Activated T-helper 2 cell treated with anti-CD3 and anti-CD28 coated beads, Interferon-gamma antibody, Interleukin-2, Interleukin-4, amounts not matched to agents 10 μg/mL and 5 μg/mL and 100 μg/mL, durations not matched to agents 14 hours and 24 hours and 36 hours (primary cell): ENCODE measurements at regions of chr2 and their contacts with region 1.

Region 1: DNA sequence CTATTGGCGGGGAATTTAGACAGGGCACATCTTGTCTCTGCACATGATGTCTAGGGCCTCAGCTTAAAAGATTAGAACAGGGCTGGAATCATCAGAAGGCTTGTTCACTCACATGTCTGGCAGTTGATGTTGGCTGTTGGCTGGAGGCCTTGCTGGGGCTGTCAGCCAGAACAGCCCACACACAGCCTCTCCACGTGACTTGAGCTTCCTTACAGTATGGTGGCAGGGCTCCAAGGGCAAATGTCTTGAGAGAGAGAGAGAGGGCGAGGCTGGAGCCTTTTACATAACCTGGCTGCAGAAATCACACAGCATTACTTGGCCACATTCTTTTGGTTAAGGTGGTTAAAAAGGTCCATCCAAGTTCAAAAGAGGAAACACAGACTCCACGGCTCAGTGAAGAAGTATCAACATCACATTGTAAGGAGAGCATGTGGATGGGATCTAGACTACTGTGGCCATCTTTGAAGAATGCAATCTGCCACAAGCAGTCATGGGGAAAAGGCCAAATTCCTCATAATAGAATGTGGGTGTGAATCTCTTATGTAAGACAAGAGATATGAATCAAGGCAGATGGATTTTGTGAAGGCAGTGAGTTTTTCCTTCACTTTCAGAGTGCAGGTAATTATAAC is 30.4 kb downstream of the SRSF7 start:
- DNase-seq: no peak
- H3K4me3 Mint-ChIP-seq: no peak overlapping the region
- H3K27ac Mint-ChIP-seq: peak overlapping the region; percentile 38
- H3K4me1 Mint-ChIP-seq: peaks cover 50% of the 10 kb centered on the region
- H3K27me3 Mint-ChIP-seq: no peaks in the 10 kb centered on the region

Region 2: DNA sequence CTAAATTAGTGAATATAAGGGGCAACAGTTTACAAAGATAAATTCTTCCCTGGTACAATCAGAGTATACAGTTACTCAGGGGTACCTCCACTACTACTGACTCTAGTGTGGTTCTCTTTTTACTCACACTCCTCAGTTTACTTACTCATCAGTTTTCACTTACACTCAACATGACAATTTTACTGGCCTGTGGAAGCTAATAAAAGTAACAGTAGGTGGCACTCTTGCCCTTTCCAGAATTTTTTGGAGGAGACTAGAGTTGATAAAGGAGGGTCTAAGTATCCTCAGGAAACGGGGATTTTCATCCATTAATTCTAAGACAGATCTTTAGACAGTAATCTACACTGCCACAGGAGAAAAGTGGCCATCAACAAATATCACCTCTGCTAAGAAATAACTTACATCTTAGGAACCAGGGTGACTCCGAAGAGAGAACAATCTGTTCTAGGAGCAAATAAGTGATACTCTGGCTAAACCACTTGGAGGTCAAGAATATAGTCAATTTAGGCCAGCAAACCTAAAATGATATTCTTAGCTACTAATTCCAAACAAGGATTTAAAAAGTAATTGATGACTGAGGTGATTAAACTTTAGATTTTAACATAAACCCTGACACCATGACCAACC is 404.9 kb before region 1 on chr2:
- intact Hi-C with region 1: loop called (anchors 10 kb)
- DNase-seq: no peak
- H3K4me3 Mint-ChIP-seq: no peak overlapping the region
- H3K27ac Mint-ChIP-seq: no peak overlapping the region
- H3K4me1 Mint-ChIP-seq: peaks cover 21% of the 10 kb centered on the region
- H3K27me3 Mint-ChIP-seq: no peaks in the 10 kb centered on the region

Region 3: GRCh38 chr2:38552259-38552658 is 168.5 kb before region 1 on chr2:
- intact Hi-C with region 1: no loop called
- DNase-seq: no peak
- H3K4me3 Mint-ChIP-seq: no peak overlapping the region
- H3K27ac Mint-ChIP-seq: peak overlapping the region; percentile 67
- H3K4me1 Mint-ChIP-seq: peaks cover 35% of the 10 kb centered on the region
- H3K27me3 Mint-ChIP-seq: no peaks in the 10 kb centered on the region

Region 4: GRCh38 chr2:38581193-38582147 is 139.3 kb before region 1 on chr2:
- intact Hi-C with region 1: loop called (anchors 2 kb)
- DNase-seq: no peak
- H3K4me3 Mint-ChIP-seq: no peak overlapping the region
- H3K27ac Mint-ChIP-seq: peak overlapping the region; percentile 15
- H3K4me1 Mint-ChIP-seq: peaks cover 39% of the 10 kb centered on the region
- H3K27me3 Mint-ChIP-seq: no peaks in the 10 kb centered on the region

Region 5: GRCh38 chr2:38602732-38603401 is 117.9 kb before region 1 on chr2 and contains the start of gene HNRNPLL:
- intact Hi-C with region 1: loop called (anchors 1 kb)
- DNase-seq: peak; percentile 95
- H3K4me3 Mint-ChIP-seq: peak within 1 kb of the TSS; percentile 90
- H3K27ac Mint-ChIP-seq: peak within 1 kb of the TSS; percentile 91
- H3K4me1 Mint-ChIP-seq: peaks cover 59% of the 10 kb centered on the region
- H3K27me3 Mint-ChIP-seq: no peaks in the 10 kb centered on the region
- total RNA-seq, gene HNRNPLL: 65.7 and 67.7 TPM in 2 replicates

Region 6: GRCh38 chr2:38665854-38666555 is 54.7 kb before region 1 on chr2 and contains the start of gene GALM:
- intact Hi-C with region 1: loop called (anchors 1 kb)
- DNase-seq: peak; percentile 51
- H3K4me3 Mint-ChIP-seq: peak within 1 kb of the TSS; percentile 88
- H3K27ac Mint-ChIP-seq: peak within 1 kb of the TSS; percentile 96
- H3K4me1 Mint-ChIP-seq: peaks cover 64% of the 10 kb centered on the region
- H3K27me3 Mint-ChIP-seq: no peaks in the 10 kb centered on the region
- total RNA-seq, gene GALM: 42.1 and 43.0 TPM in 2 replicates

Region 7: GRCh38 chr2:38682008-38682575 is 38.6 kb before region 1 on chr2:
- intact Hi-C with region 1: loop called (anchors 1 kb)
- DNase-seq: no peak
- H3K4me3 Mint-ChIP-seq: peak overlapping the region; percentile 58
- H3K27ac Mint-ChIP-seq: peak overlapping the region; percentile 81
- H3K4me1 Mint-ChIP-seq: peaks cover 54% of the 10 kb centered on the region
- H3K27me3 Mint-ChIP-seq: no peaks in the 10 kb centered on the region

Region 8: GRCh38 chr2:38690499-38691294 is 30.0 kb before region 1 on chr2:
- intact Hi-C with region 1: loop called (anchors 2 kb)
- DNase-seq: no peak
- H3K4me3 Mint-ChIP-seq: no peak overlapping the region
- H3K27ac Mint-ChIP-seq: peak overlapping the region; percentile 84
- H3K4me1 Mint-ChIP-seq: peaks cover 45% of the 10 kb centered on the region
- H3K27me3 Mint-ChIP-seq: no peaks in the 10 kb centered on the region

Region 9: DNA sequence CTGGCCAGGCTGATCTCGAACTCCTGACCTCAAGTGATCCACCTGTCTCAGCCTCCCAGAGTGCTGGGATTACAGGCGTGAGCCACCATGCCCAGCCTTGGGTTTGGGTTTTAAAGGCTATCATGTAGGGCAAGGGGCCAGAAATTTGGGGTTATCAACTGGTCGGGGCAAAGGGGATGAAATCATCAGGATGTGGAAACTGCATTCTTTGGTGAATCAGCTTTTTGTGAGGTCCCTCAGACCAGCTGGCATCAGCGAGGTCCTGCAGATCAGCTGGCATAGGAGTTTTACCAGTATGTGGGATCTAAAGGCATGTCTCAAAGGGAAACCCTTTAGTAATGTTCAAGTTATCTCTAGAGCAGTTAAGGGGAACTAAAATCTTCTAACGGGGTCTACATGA is 50.9 kb after region 1 on chr2:
- intact Hi-C with region 1: no loop called
- DNase-seq: no peak
- H3K4me3 Mint-ChIP-seq: no peak overlapping the region
- H3K27ac Mint-ChIP-seq: no peak overlapping the region
- H3K4me1 Mint-ChIP-seq: no peaks in the 10 kb centered on the region
- H3K27me3 Mint-ChIP-seq: peaks cover 18% of the 10 kb centered on the region